ENCODE measurements at regions of chr9 and their contacts with region 1.

Region 1: GRCh38 chr9:2709645-2710101 is 7.6 kb upstream of the KCNV2 start:
- DNase-seq: no peak
- ATAC-seq: no peak
- H3K4me3 ChIP-seq: no peak overlapping the region
- H3K27ac ChIP-seq: no peak overlapping the region
- H3K4me1 ChIP-seq: no peaks in the 10 kb centered on the region
- H3K27me3 ChIP-seq: no peaks in the 10 kb centered on the region
- CTCF ChIP-seq: no peak

Region 2: DNA sequence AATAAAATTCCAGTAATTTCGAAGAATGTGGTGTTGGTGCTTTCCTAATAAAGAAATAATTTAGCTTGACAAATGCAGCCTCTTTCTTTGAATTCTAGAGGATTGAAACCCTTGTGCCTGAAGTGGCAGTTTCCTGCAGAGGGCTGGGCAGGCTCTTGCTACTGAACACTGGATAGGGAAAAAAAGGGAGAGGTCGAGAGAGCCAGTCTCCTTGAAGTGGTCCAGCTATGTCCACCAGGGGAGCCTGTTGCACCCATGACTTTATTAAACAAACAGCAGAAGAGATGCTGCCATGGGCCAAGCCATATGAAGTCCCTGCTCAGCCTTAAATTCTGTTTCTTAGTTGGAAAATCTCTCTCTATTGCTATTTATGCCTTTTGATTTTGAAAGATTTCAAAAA is 516.1 kb before region 1 on chr9:
- CTCF ChIA-PET with region 1: no interaction called
- POLR2A ChIA-PET with region 1: no interaction called
- in situ Hi-C with region 1: no loop called
- intact Hi-C with region 1: no loop called
- DNase-seq: no peak
- ATAC-seq: no peak
- H3K4me3 ChIP-seq: no peak overlapping the region
- H3K27ac ChIP-seq: no peak overlapping the region
- H3K4me1 ChIP-seq: no peaks in the 10 kb centered on the region
- H3K27me3 ChIP-seq: no peaks in the 10 kb centered on the region
- CTCF ChIP-seq: no peak

Region 3: GRCh38 chr9:3887786-3888496 is 1178.3 kb after region 1 on chr9:
- CTCF ChIA-PET with region 1: no interaction called
- POLR2A ChIA-PET with region 1: interaction called, 18 read pairs
- in situ Hi-C with region 1: no loop called
- intact Hi-C with region 1: no loop called
- DNase-seq: no peak
- ATAC-seq: no peak
- H3K4me3 ChIP-seq: no peak overlapping the region
- H3K27ac ChIP-seq: no peak overlapping the region
- H3K4me1 ChIP-seq: no peaks in the 10 kb centered on the region
- H3K27me3 ChIP-seq: no peaks in the 10 kb centered on the region
- CTCF ChIP-seq: no peak